ENCODE measurements at regions of chr2 and their contacts with region 1.

Region 1: GRCh38 chr2:197184959-197185586 is 125.5 kb downstream of the ANKRD44 start:
- DNase-seq: peak; percentile 85 to 94 (median 88)
- ATAC-seq: peak; percentile 95 to 96 (median 96)
- H3K4me3 ChIP-seq: no peak overlapping the region
- H3K27ac ChIP-seq: peak overlapping the region in 9 of 12 donors; percentile 7 to 59 (median 47)
- H3K4me1 ChIP-seq: peaks cover 0 to 26% (median 13%) of the 10 kb centered on the region in 12 donors
- H3K27me3 ChIP-seq: no peaks in the 10 kb centered on the region
- CTCF ChIP-seq: no peak
- POLR2A ChIP-seq: no peak

Region 2: DNA sequence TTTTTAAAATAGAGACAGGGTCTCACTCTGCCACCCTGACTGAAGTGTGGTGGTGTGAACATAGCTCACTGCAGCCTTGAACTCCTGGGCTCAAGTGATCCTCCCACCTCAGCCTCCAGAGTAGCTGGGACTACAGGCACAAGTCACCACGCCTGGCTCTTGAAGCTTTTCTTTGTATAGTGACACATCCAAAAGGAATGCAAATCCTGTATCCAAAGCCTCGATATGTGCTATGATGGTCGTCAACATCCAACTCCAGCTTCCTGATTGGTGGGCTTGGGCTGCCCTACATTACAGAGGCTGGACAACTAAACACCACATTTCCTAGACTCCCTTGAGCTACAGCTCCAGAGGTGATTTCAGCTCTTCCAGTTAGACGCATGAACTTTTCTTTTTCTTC is 156.8 kb before region 1 on chr2:
- intact Hi-C with region 1: loop called in 1 of 10 experiments (anchors 10 kb)
- DNase-seq: no peak
- ATAC-seq: peak in 1 of 4 donors; percentile 20
- H3K4me3 ChIP-seq: no peak overlapping the region
- H3K27ac ChIP-seq: no peak overlapping the region
- H3K4me1 ChIP-seq: peaks cover 0 to 9% (median 0%) of the 10 kb centered on the region in 12 donors
- H3K27me3 ChIP-seq: no peaks in the 10 kb centered on the region
- CTCF ChIP-seq: no peak
- POLR2A ChIP-seq: no peak

Region 3: GRCh38 chr2:197124639-197125390 is 60.3 kb before region 1 on chr2:
- intact Hi-C with region 1: loop called in 1 of 10 experiments (anchors 5 kb)
- DNase-seq: no peak
- ATAC-seq: no peak
- H3K4me3 ChIP-seq: no peak overlapping the region
- H3K27ac ChIP-seq: peak overlapping the region in 1 of 12 donors; percentile 36
- H3K4me1 ChIP-seq: peaks cover 0 to 16% (median 0%) of the 10 kb centered on the region in 12 donors
- H3K27me3 ChIP-seq: no peaks in the 10 kb centered on the region
- CTCF ChIP-seq: no peak
- POLR2A ChIP-seq: no peak